ENCODE measurements at regions of chrX and their contacts with region 1.

Region 1: GRCh38 chrX:38768079-38768478 is 33.2 kb upstream of the MID1IP1 start:
- DNase-seq: peak in 1 of 4 experiments; percentile 23
- ATAC-seq: 0 out of 3 replicates have a peak, but pooled peaks have one; percentile 17
- H3K4me3 ChIP-seq: no peak overlapping the region
- H3K27ac ChIP-seq: no peak overlapping the region
- H3K4me1 ChIP-seq: peaks cover 0 to 5% of the 10 kb centered on the region in 2 experiments; a peak in 2 of 5 replicates
- H3K27me3 ChIP-seq: no peaks in the 10 kb centered on the region
- CTCF ChIP-seq: peak; percentile 38 to 62 (median 46); a peak in 4 of 6 replicates
- EP300 ChIP-seq: no peak
- POLR2A ChIP-seq: no peak
- RAD21 ChIP-seq: peak; percentile 51 to 71

Region 2: DNA sequence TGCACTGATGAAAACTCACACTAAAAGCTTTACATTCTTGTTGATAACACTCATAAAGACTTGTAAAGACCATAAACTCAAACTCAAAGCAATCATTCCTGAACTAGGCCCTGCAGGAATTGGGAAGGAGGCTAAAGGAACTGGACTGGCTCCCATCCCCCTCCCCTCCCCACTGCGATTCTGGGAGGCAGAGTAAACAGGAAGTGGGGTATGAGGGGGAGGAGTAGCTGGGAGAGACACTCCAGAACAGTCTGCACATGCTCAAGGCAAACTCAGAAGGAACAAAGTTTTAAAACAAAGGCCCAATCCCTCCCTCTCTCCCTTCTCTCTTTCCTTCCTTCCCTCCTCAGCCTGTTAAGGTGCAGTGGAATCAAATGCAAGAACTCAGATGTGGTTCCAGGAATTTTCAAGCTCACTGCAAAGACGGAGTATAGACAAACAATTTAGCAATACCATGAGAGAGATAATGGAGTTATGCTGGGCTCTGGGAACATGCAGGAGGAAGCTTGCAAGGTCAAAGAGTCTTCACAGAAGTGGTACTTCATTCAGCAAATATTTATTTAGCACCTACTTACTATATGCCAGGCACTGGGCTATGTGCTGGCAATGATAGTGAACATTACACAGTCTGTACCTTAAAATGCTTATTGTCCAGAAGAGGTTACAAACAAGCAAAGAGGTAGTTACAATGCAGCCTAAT is 49.1 kb after region 1 on chrX:
- CTCF ChIA-PET with region 1: no interaction called
- POLR2A ChIA-PET with region 1: no interaction called
- in situ Hi-C with region 1: no loop called
- intact Hi-C with region 1: no loop called
- DNase-seq: peak; percentile 14 to 65 (median 36)
- ATAC-seq: peak; percentile 90
- H3K4me3 ChIP-seq: no peak overlapping the region
- H3K27ac ChIP-seq: peak overlapping the region; percentile 70
- H3K4me1 ChIP-seq: peaks cover 0 to 16% of the 10 kb centered on the region in 2 experiments; a peak in 3 of 5 replicates
- H3K27me3 ChIP-seq: no peaks in the 10 kb centered on the region; a peak in 1 of 5 replicates
- CTCF ChIP-seq: no peak
- EP300 ChIP-seq: peak; percentile 64
- POLR2A ChIP-seq: no peak
- RAD21 ChIP-seq: no peak

Region 3: GRCh38 chrX:38929966-38930421 is 161.9 kb after region 1 on chrX:
- CTCF ChIA-PET with region 1: no interaction called
- POLR2A ChIA-PET with region 1: no interaction called
- in situ Hi-C with region 1: no loop called
- intact Hi-C with region 1: loop called (anchors 10 kb)
- DNase-seq: peak in 2 of 4 experiments; percentile 8 to 15
- ATAC-seq: peak; percentile 64
- H3K4me3 ChIP-seq: no peak overlapping the region
- H3K27ac ChIP-seq: no peak overlapping the region; the same call in 2 of the 3 replicates
- H3K4me1 ChIP-seq: peaks cover 0 to 6% of the 10 kb centered on the region in 2 experiments; a peak in 2 of 5 replicates
- H3K27me3 ChIP-seq: no peaks in the 10 kb centered on the region
- CTCF ChIP-seq: no peak
- EP300 ChIP-seq: no peak
- POLR2A ChIP-seq: no peak
- RAD21 ChIP-seq: no peak

Region 4: DNA sequence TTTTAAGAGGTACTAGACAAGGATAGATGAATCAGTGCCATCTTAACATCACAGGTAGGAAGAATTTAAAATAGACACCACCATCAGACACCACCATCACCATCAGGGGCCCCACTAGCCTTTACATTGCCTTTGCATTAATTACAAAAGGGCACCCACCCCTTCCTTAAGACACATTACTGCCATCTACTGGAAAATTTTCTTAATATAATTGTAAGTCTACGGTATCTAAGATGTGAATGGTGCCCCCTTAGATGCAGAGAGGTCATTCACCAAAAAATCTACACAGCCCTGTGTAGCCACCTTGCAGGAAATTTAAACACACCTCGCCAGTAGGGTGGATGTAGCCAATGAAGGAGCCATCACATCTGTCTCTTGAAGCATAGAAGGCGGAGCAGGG is 217.3 kb after region 1 on chrX:
- CTCF ChIA-PET with region 1: no interaction called
- POLR2A ChIA-PET with region 1: interaction called, 3 read pairs
- in situ Hi-C with region 1: loop called (anchors 10 kb)
- intact Hi-C with region 1: loop called (anchors 2 kb)
- DNase-seq: peak; percentile 9 to 36 (median 18)
- ATAC-seq: peak; percentile 81
- H3K4me3 ChIP-seq: no peak overlapping the region
- H3K27ac ChIP-seq: no peak overlapping the region
- H3K4me1 ChIP-seq: peaks cover 0 to 7% of the 10 kb centered on the region in 2 experiments; a peak in 3 of 5 replicates
- H3K27me3 ChIP-seq: no peaks in the 10 kb centered on the region
- CTCF ChIP-seq: peak; percentile 25 to 51 (median 50); a peak in 3 of 6 replicates
- EP300 ChIP-seq: no peak
- POLR2A ChIP-seq: no peak
- RAD21 ChIP-seq: peak; percentile 44 to 66

Measured in K562 (cell line).